ENCODE measurements at regions of chr19 and their contacts with region 1.

Region 1: DNA sequence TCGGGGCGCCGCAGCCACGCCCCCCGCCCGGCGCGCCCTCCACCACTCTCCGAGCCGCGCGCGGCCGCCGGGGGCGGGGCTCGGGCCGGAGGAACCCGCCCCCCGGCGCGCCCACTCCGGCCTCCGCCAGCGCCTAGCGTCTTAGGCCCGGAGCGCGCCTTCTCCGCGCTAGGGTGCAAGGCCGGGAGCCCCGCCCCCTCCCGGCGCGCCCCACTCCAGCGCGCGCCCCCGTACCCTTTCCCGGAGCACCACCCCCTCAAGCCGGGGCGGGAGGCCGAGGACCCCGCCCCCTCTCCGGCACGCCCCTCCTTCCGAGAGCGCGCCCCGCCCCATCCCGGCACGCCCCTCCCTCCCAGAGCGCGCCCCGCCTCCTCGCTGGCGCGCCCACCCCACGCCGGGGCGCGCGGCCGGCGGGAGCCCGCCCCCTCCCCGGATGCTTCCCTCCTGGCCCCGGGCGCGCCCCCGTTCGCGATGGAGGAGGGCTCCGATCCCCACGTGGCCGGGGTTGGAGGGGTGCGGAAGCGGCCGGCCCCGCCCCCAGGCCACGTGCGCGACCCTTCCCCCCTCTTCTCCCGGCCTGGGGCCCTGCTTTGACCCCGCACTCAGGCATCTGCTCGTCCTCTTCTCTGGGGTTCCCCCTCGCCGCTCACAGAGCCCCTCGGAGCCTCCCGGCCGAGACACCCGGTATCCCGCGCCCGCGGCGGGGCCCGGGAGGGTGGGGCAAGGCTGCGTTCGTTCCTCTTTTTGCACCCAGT is 524 bp upstream of the KLF16 start:
- DNase-seq: peak; percentile 90 to 96
- ATAC-seq: peak; percentile 73 to 90 (median 74)
- H3K4me3 ChIP-seq: peak overlapping the region; percentile 73
- H3K4me3 Mint-ChIP-seq: peak overlapping the region; percentile 78
- H3K27ac ChIP-seq: peak overlapping the region; percentile 67
- H3K27ac Mint-ChIP-seq: peak overlapping the region; percentile 46 to 77
- H3K4me1 ChIP-seq: peaks cover 47% of the 10 kb centered on the region
- H3K4me1 Mint-ChIP-seq: peaks cover 18 to 48% of the 10 kb centered on the region in 2 donors
- H3K27me3 ChIP-seq: no peaks in the 10 kb centered on the region
- H3K27me3 Mint-ChIP-seq: no peaks in the 10 kb centered on the region
- CTCF ChIP-seq: no peak

Region 2: DNA sequence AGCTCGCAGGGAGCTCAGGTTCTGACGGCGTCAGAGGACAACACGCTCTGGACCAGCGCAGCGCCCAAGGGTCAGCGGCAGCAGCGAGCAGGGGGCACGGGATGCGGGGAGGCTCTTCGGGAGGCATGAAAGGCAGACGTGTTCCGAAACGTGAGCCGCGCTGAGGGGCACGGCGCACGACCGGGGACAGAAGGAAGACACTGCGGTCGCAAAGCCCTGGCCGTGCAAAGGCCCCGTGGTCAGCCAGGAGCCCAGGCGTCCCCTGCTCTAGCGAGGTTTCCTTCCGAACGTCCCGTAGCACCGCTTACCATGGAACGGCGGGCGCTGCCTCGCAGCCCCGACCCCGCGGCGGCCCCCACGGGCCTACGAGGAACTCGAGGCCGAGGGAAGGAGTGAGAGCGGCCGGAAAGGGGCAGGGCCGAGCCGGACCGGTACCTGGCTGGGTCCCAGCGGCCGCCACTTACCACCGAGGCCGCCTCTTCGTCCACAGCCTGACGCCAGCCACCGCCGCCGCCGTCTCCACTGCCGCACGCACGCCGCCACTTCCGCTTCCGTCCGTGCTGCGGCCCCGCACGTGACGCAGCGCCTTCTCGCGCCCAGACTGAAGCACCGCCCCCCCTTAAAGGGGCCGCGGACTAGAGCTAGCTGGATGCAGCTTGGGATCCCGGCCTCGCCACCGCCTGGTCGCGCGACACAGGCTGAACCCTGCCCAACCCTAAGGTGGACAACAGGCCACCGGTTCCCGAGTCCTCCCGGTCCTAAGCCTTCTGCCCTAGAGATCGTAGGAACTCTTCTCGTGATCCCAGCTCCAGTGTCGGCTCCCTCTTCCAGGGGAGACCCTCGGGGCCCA is 12.0 kb after region 1 on chr19:
- intact Hi-C with region 1: loop called (anchors 1 kb)
- DNase-seq: peak; percentile 92 to 94
- ATAC-seq: peak; percentile 85 to 93 (median 87)
- H3K4me3 ChIP-seq: peak overlapping the region; percentile 81
- H3K4me3 Mint-ChIP-seq: peak overlapping the region; percentile 97
- H3K27ac ChIP-seq: peak overlapping the region; percentile 91
- H3K27ac Mint-ChIP-seq: peak overlapping the region; percentile 97 to 98
- H3K4me1 ChIP-seq: peaks cover 50% of the 10 kb centered on the region
- H3K4me1 Mint-ChIP-seq: peaks cover 43 to 44% of the 10 kb centered on the region in 2 donors
- H3K27me3 ChIP-seq: no peaks in the 10 kb centered on the region
- H3K27me3 Mint-ChIP-seq: no peaks in the 10 kb centered on the region
- CTCF ChIP-seq: no peak

Measured in natural killer cell (primary cell).